HCT116 (cell line): ENCODE measurements at regions of chr6 and their contacts with region 1.

Region 1: GRCh38 chr6:142146828-142147662 is at the starts of genes NMBR and VTA1:
- DNase-seq: peak; percentile 99
- ATAC-seq: peak; percentile 99
- H3K4me3 ChIP-seq: peak within 1 kb of the TSS; percentile 83
- H3K27ac ChIP-seq: peak within 1 kb of the TSS; percentile 27; the same call in 1 of the 2 replicates
- H3K4me1 ChIP-seq: peaks cover 7 to 15% of the 10 kb centered on the region in 2 experiments; a peak in 3 of 4 replicates
- H3K27me3 ChIP-seq: no peaks in the 10 kb centered on the region
- CTCF ChIP-seq: peak; percentile 82 to 89 (median 85)
- POLR2A ChIP-seq: peak; percentile 77
- RAD21 ChIP-seq: peak; percentile 91
- total RNA-seq, gene NMBR: not detected
- total RNA-seq, gene VTA1: 67.8 TPM

Region 2: GRCh38 chr6:142013286-142013685 is 133.8 kb before region 1 on chr6:
- CTCF ChIA-PET with region 1: no interaction called
- POLR2A ChIA-PET with region 1: no interaction called
- RAD21 ChIA-PET with region 1: no interaction called
- intact Hi-C with region 1: no loop called
- DNase-seq: peak; percentile 84
- ATAC-seq: 0 out of 2 replicates have a peak, but pooled peaks have one; percentile 20
- H3K4me3 ChIP-seq: peak overlapping the region in 1 of 2 experiments; percentile 10; a peak in 1 of 4 replicates
- H3K27ac ChIP-seq: peak overlapping the region; percentile 79; the same call in 1 of the 2 replicates
- H3K4me1 ChIP-seq: peaks cover 63 to 72% of the 10 kb centered on the region in 2 experiments
- H3K27me3 ChIP-seq: no peaks in the 10 kb centered on the region
- CTCF ChIP-seq: no peak
- POLR2A ChIP-seq: no peak
- RAD21 ChIP-seq: peak; percentile 22; the same call in 1 of the 2 replicates

Region 3: GRCh38 chr6:142235272-142235671 is 88.2 kb after region 1 on chr6:
- CTCF ChIA-PET with region 1: no interaction called
- POLR2A ChIA-PET with region 1: no interaction called
- RAD21 ChIA-PET with region 1: no interaction called
- intact Hi-C with region 1: no loop called
- DNase-seq: no peak
- ATAC-seq: no peak
- H3K4me3 ChIP-seq: no peak overlapping the region
- H3K27ac ChIP-seq: no peak overlapping the region
- H3K4me1 ChIP-seq: no peaks in the 10 kb centered on the region
- H3K27me3 ChIP-seq: no peaks in the 10 kb centered on the region
- CTCF ChIP-seq: no peak
- POLR2A ChIP-seq: no peak
- RAD21 ChIP-seq: no peak

Region 4: GRCh38 chr6:142387997-142388815 is 241.2 kb after region 1 on chr6:
- CTCF ChIA-PET with region 1: no interaction called
- POLR2A ChIA-PET with region 1: no interaction called
- RAD21 ChIA-PET with region 1: no interaction called
- intact Hi-C with region 1: loop called (anchors 2 kb)
- DNase-seq: no peak
- ATAC-seq: peak; percentile 83
- H3K4me3 ChIP-seq: no peak overlapping the region
- H3K27ac ChIP-seq: peak overlapping the region; percentile 10; the same call in 1 of the 2 replicates
- H3K4me1 ChIP-seq: peaks cover 0 to 4% of the 10 kb centered on the region in 2 experiments; a peak in 1 of 4 replicates
- H3K27me3 ChIP-seq: no peaks in the 10 kb centered on the region
- CTCF ChIP-seq: peak; percentile 56 to 72 (median 64); a peak in 5 of 6 replicates
- POLR2A ChIP-seq: no peak
- RAD21 ChIP-seq: peak; percentile 81

Region 5: DNA sequence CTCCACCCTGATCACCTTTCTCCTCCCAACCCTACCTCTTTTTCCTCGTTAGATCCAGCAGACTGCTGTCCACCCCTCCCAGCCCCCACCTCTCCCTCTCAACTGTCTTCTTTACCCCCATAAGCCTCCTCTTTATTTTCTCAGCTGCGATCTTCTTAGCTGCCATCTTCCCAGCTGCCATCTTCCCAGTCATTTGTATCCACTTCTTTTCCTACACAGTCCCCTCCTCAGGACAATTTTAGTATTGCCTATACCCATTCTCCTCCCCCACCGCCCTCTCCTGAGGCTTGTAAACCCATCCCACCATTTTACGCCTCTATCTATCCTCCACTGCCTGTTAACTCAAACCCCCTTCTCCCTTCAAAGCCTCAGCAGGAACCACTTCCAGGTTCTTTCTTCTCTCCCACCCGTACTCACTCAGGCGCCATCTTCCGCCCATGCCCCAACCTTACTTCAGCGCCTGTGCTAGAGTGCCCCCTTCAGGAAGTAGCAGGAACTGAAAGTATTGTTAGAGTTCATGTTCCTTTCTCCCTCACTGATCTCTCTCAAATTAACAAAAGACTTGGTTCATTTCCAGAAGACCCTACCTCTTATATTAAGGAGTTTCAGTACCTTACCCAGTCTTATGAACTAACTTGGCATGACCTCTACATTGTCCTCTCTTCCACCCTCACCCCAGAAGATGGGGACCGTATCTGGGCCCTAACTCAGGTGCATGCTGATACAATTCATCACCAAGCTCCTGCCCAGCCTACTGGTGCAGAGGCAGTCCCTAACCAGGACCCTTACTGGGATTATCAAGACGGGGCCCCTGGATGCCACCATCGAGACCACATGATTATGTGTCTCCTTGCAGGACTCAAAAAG is 390.8 kb after region 1 on chr6:
- CTCF ChIA-PET with region 1: no interaction called
- POLR2A ChIA-PET with region 1: no interaction called
- RAD21 ChIA-PET with region 1: no interaction called
- intact Hi-C with region 1: loop called (anchors 2 kb)
- DNase-seq: peak; percentile 34
- ATAC-seq: peak; percentile 79
- H3K4me3 ChIP-seq: peak overlapping the region; percentile 15 to 38; a peak in 2 of 4 replicates
- H3K27ac ChIP-seq: no peak overlapping the region
- H3K4me1 ChIP-seq: peaks cover 2 to 10% of the 10 kb centered on the region in 2 experiments; a peak in 3 of 4 replicates
- H3K27me3 ChIP-seq: no peaks in the 10 kb centered on the region
- CTCF ChIP-seq: peak; percentile 81 to 86 (median 82)
- POLR2A ChIP-seq: no peak
- RAD21 ChIP-seq: peak; percentile 82